ENCODE measurements at regions of chr15 and their contacts with region 1.

Region 1: DNA sequence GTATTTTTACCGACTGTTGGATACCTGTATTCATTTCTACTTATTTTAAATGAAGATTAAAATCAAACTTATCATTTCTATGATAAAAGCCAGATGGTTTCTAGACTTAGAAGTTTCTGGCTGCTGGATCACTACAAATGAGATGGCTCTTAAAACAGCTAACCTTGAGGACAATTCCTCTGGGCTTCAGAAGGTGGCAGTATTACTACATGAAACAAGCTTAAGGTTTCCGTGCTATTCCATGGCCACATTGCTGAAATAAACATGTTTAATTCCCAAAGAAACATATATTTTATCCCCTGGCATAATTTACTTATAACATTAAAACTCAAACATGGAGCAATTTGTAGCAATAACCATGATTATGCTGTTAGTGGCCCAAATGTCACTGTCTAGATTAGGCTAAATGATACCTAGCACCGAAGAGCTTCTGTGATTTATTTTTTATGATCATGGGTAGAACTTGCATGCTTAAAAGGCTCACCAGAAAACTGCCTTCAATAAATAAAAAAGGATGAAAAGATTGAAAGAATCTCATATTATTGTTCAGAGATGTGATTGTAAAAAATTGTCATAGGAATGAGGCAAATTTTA is 204.0 kb upstream of the NANOGP8 start:
- DNase-seq: peak; percentile 81
- ATAC-seq: peak; percentile 87
- H3K4me3 ChIP-seq: no peak overlapping the region
- H3K27ac ChIP-seq: no peak overlapping the region
- H3K4me1 ChIP-seq: peaks cover 6% of the 10 kb centered on the region
- H3K27me3 ChIP-seq: no peaks in the 10 kb centered on the region
- CTCF ChIP-seq: peak; percentile 87
- POLR2A ChIP-seq: no peak
- RAD21 ChIP-seq: peak; percentile 94

Region 2: DNA sequence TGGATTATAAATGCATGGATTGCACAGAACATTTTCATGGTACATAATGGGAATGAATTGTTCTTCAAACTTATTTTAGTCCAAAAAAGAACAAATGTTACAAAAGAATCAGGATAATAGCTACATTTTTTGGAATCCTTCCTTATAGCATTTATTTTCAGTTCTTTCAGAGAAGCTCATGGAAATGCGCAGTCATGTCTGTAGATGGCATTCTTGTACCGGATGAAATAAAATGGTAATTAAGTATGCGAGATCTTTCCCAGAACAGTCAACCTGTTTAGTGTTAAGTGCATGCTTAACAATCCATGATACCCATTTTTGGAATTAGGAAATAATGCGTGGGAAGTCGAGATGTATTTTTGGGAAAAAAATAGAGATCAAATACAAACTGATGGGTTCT is 667.4 kb before region 1 on chr15:
- CTCF ChIA-PET with region 1: no interaction called
- POLR2A ChIA-PET with region 1: no interaction called
- dilution Hi-C with region 1: no loop called
- in situ Hi-C with region 1: no loop called
- intact Hi-C with region 1: loop called (anchors 10 kb)
- DNase-seq: peak; percentile 58
- ATAC-seq: peak; percentile 81
- H3K4me3 ChIP-seq: no peak overlapping the region
- H3K27ac ChIP-seq: no peak overlapping the region
- H3K4me1 ChIP-seq: no peaks in the 10 kb centered on the region
- H3K27me3 ChIP-seq: peaks cover 3% of the 10 kb centered on the region
- CTCF ChIP-seq: peak; percentile 64
- POLR2A ChIP-seq: no peak
- RAD21 ChIP-seq: peak; percentile 75

Region 3: DNA sequence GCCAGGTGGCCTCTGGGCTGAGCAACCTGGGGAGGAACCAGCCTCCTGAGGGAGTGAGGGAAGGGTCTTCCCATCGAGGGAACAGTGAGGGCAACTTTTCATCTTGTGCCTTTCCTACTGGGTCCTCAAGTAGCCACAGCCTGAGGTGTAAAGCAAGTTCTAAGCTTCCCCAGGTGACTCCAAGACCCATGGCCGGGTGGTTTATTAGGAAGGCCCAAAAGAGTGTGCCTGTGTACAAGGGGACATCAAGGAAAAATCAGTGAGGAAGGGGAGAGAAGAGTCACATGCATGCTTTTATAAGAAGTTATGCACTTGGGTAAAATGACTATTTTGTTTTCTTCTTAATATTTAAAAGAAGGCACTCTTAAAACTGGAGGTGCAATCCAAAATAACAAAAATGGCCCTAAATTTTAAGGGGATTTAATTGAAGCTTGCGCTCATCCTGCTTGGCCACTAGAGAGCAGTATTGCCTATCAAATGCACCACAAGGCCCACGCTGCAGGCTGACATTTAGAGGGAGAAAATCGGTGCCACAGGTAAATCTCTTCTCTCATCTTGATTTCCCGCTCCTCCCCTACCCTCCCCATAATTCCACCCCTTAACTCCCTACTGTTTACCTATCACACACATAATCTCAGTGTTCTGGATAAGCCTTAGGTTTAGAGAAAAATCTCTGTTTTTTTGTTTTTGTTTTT is 210.8 kb before region 1 on chr15:
- CTCF ChIA-PET with region 1: interaction called, 8 read pairs
- POLR2A ChIA-PET with region 1: interaction called, 3 read pairs
- dilution Hi-C with region 1: no loop called
- in situ Hi-C with region 1: loop called (anchors 10 kb)
- intact Hi-C with region 1: loop called (anchors 1 kb)
- DNase-seq: peak; percentile 72
- ATAC-seq: peak; percentile 80
- H3K4me3 ChIP-seq: no peak overlapping the region
- H3K27ac ChIP-seq: no peak overlapping the region
- H3K4me1 ChIP-seq: peaks cover 5% of the 10 kb centered on the region; the same call in 1 of the 2 replicates
- H3K27me3 ChIP-seq: no peaks in the 10 kb centered on the region
- CTCF ChIP-seq: peak; percentile 95
- POLR2A ChIP-seq: 0 out of 2 replicates have a peak, but pooled peaks have one; percentile 47
- RAD21 ChIP-seq: peak; percentile 97

Region 4: GRCh38 chr15:35319354-35319753 is 30.2 kb after region 1 on chr15:
- CTCF ChIA-PET with region 1: no interaction called
- POLR2A ChIA-PET with region 1: no interaction called
- dilution Hi-C with region 1: no loop called
- in situ Hi-C with region 1: no loop called
- intact Hi-C with region 1: no loop called
- DNase-seq: no peak
- ATAC-seq: no peak
- H3K4me3 ChIP-seq: no peak overlapping the region
- H3K27ac ChIP-seq: no peak overlapping the region
- H3K4me1 ChIP-seq: no peaks in the 10 kb centered on the region
- H3K27me3 ChIP-seq: no peaks in the 10 kb centered on the region
- CTCF ChIP-seq: no peak
- POLR2A ChIP-seq: no peak
- RAD21 ChIP-seq: no peak

Region 5: DNA sequence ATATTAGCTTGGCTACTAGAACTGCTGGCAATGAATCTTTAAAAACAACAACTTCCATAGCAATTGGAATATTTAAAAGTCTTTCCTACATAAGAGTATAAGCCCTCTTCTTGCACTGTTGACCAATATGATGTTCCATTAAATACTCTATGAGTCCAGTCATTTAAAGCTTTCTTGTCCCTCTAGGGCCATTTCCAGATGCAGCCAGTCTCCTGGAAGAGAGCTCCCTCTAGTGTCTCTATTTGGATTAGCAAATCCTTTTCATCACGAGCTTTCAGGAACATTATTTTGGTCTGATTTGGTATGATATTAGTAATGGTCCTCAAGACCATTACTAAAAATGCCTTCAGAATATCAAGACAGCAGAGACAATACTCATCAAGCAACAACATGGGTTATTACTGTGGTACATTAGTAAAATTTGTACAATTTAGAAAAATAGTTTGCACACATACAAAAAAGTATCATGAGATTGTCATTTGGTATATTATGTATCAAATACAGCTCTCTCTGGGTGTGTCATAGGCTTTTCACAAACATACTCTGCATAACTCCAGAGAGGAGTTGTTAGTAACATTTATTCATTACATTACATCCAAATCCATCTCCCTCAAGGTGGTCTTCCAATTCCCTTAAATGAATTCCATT is 155.6 kb after region 1 on chr15:
- CTCF ChIA-PET with region 1: interaction called, 70 read pairs
- POLR2A ChIA-PET with region 1: no interaction called
- dilution Hi-C with region 1: no loop called
- in situ Hi-C with region 1: loop called (anchors 5 kb)
- intact Hi-C with region 1: loop called (anchors 1 kb)
- DNase-seq: peak; percentile 63
- ATAC-seq: no peak; the same call in 1 of the 2 replicates
- H3K4me3 ChIP-seq: no peak overlapping the region
- H3K27ac ChIP-seq: no peak overlapping the region
- H3K4me1 ChIP-seq: peaks cover 8% of the 10 kb centered on the region; the same call in 1 of the 2 replicates
- H3K27me3 ChIP-seq: no peaks in the 10 kb centered on the region
- CTCF ChIP-seq: peak; percentile 84
- POLR2A ChIP-seq: no peak
- RAD21 ChIP-seq: peak; percentile 88

Region 6: GRCh38 chr15:35545824-35546510 is 256.8 kb after region 1 on chr15 and contains the start of gene DPH6:
- CTCF ChIA-PET with region 1: no interaction called
- POLR2A ChIA-PET with region 1: no interaction called
- dilution Hi-C with region 1: no loop called
- in situ Hi-C with region 1: no loop called
- intact Hi-C with region 1: loop called (anchors 10 kb)
- DNase-seq: peak; percentile 79
- ATAC-seq: peak; percentile 94
- H3K4me3 ChIP-seq: peak within 1 kb of the TSS; percentile 79
- H3K27ac ChIP-seq: peak within 1 kb of the TSS; percentile 96
- H3K4me1 ChIP-seq: peaks cover 2% of the 10 kb centered on the region; the same call in 1 of the 2 replicates
- H3K27me3 ChIP-seq: no peaks in the 10 kb centered on the region
- CTCF ChIP-seq: no peak
- POLR2A ChIP-seq: peak; percentile 79
- RAD21 ChIP-seq: no peak
- total RNA-seq, gene DPH6: 8.1 and 21.4 TPM in 2 replicates

Region 7: GRCh38 chr15:35740761-35741160 is 451.6 kb after region 1 on chr15:
- CTCF ChIA-PET with region 1: no interaction called
- POLR2A ChIA-PET with region 1: no interaction called
- dilution Hi-C with region 1: no loop called
- in situ Hi-C with region 1: no loop called
- intact Hi-C with region 1: loop called (anchors 10 kb)
- DNase-seq: peak; percentile 89
- ATAC-seq: peak; percentile 70
- H3K4me3 ChIP-seq: no peak overlapping the region
- H3K27ac ChIP-seq: no peak overlapping the region
- H3K4me1 ChIP-seq: no peaks in the 10 kb centered on the region
- H3K27me3 ChIP-seq: no peaks in the 10 kb centered on the region
- CTCF ChIP-seq: no peak
- POLR2A ChIP-seq: no peak
- RAD21 ChIP-seq: no peak

Measured in IMR-90 (cell line).